Heart left ventricle (tissue), 16 donors: ENCODE measurements at regions of chr19 and their contacts with region 1.

Region 1: GRCh38 chr19:44845612-44846454 is at the start of gene NECTIN2:
- DNase-seq: peak; percentile 99 to 100 (median 100)
- ATAC-seq: peak; percentile 83 to 86 (median 86)
- H3K4me3 ChIP-seq: peak within 1 kb of the TSS; percentile 86 to 100 (median 99)
- H3K27ac ChIP-seq: peak within 1 kb of the TSS; percentile 94 to 100 (median 98)
- H3K4me1 ChIP-seq: peaks cover 15 to 56% (median 39%) of the 10 kb centered on the region in 12 donors
- H3K27me3 ChIP-seq: no peaks in the 10 kb centered on the region
- CTCF ChIP-seq: peak; percentile 39 to 86 (median 66)
- POLR2A ChIP-seq: peak; percentile 67 to 92
- total RNA-seq, gene NECTIN2: 37.0 to 99.6 (median 57.6) TPM

Region 2: DNA sequence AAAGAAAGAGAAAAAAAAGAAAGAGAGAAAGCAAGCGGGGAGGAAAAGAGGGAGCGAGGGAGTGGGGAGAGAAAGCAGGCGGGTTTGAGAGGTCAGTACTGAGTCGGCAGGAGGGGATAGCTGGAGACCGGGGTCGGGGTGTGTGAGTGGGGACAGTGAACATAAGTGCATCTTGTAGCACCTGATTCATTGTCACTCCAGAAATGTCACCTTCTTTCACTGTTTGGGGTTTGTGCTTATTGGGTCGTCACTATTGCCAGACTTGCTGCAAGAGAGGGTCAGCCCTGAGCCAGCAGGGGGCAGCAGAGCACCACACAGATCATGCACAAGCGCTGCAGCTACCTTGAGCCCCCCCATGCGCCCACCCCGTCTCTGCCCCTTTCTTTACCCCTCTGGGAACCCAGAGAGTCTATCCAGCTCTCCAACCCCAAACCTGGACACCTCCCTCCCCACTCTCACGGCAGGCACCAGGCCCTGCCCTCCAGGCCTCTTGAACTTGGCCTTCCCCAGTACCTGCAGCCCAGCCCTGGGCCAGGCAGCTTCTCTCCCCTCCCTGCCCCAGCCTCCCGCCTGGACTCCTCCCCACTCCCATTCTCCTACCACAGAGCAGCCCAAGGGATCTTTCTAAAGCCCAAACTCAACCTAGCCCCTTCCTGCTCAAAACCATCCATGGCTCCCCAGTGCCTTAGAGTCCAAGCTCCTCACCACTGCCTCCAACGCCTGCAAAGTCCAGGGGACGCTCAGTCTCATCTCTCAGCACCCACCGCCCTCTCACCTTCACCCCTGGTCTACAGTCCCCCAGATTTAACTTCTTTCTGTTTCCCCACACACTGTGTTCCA is 156.6 kb before region 1 on chr19:
- intact Hi-C with region 1: loop called in 3 of 10 experiments (anchors 5 to 10 kb)
- DNase-seq: peak; percentile 67 to 87 (median 75)
- ATAC-seq: peak; percentile 21 to 63 (median 46)
- H3K4me3 ChIP-seq: no peak overlapping the region
- H3K27ac ChIP-seq: peak overlapping the region in 1 of 12 donors; percentile 29
- H3K4me1 ChIP-seq: peaks cover 0 to 65% (median 22%) of the 10 kb centered on the region in 12 donors
- H3K27me3 ChIP-seq: no peaks in the 10 kb centered on the region
- CTCF ChIP-seq: peak; percentile 90 to 96 (median 94)
- POLR2A ChIP-seq: no peak

Region 3: GRCh38 chr19:44782729-44783128 is 63.1 kb before region 1 on chr19:
- intact Hi-C with region 1: loop called (anchors 1 to 5 kb)
- DNase-seq: no peak
- ATAC-seq: no peak
- H3K4me3 ChIP-seq: no peak overlapping the region
- H3K27ac ChIP-seq: no peak overlapping the region
- H3K4me1 ChIP-seq: peaks cover 0 to 9% (median 4%) of the 10 kb centered on the region in 12 donors
- H3K27me3 ChIP-seq: peaks cover 0 to 5% (median 2%) of the 10 kb centered on the region in 9 donors
- CTCF ChIP-seq: no peak
- POLR2A ChIP-seq: no peak

Region 4: DNA sequence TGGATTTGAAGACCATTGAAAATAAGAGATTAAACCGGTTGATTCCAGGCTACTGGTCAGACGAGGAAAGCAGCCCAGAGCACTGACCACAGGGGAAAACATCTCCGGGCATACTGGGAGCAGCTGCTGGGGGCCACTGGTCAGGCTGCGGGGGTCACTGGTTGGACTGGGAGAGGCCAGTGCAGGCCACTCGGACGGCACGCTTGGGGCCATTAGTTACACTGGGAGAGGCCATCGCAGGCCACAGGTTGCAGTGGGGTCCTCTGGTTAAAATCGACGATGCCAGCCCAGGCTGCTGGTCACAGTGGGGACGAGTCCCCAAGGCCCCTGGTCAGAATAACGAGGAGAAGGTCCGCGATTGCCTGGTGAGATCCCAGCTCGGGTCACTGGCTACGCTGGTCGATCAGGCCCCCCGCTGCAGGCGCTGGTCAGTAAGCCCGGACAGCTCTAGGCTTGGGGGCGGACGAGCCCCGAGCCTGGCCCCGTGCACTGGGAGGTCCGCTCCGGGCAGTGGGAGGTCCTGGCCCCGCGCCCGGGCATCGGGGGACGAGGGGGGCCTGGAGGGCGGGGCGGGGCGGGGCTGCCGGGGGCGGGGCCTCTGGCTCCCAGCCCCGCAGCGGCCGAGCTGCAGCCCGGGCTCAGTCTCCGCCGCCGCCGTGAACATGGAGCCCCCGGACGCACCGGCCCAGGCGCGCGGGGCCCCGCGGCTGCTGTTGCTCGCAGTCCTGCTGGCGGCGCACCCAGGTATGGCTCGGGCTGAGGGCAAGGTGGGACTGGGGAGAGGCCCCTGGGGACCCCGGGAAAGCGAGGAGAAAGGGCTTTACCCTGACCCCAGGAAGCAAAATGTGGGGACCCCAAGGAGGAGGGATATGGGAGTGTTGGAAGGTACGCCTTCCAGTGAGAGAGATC is 37.1 kb before region 1 on chr19 and contains the start of gene BCAM:
- intact Hi-C with region 1: loop called in 4 of 10 experiments (anchors 2 kb)
- DNase-seq: peak; percentile 87 to 93 (median 93)
- ATAC-seq: peak; percentile 80 to 96 (median 92)
- H3K4me3 ChIP-seq: peak within 1 kb of the TSS; percentile 32 to 94 (median 77)
- H3K27ac ChIP-seq: peak within 1 kb of the TSS; percentile 8 to 97 (median 86)
- H3K4me1 ChIP-seq: peaks cover 0 to 50% (median 22%) of the 10 kb centered on the region in 12 donors
- H3K27me3 ChIP-seq: peaks cover 0 to 8% (median 0%) of the 10 kb centered on the region in 9 donors
- CTCF ChIP-seq: no peak
- POLR2A ChIP-seq: peak in 1 of 2 donors; percentile 68
- total RNA-seq, gene BCAM: 50.9 to 160 (median 94.3) TPM

Region 5: DNA sequence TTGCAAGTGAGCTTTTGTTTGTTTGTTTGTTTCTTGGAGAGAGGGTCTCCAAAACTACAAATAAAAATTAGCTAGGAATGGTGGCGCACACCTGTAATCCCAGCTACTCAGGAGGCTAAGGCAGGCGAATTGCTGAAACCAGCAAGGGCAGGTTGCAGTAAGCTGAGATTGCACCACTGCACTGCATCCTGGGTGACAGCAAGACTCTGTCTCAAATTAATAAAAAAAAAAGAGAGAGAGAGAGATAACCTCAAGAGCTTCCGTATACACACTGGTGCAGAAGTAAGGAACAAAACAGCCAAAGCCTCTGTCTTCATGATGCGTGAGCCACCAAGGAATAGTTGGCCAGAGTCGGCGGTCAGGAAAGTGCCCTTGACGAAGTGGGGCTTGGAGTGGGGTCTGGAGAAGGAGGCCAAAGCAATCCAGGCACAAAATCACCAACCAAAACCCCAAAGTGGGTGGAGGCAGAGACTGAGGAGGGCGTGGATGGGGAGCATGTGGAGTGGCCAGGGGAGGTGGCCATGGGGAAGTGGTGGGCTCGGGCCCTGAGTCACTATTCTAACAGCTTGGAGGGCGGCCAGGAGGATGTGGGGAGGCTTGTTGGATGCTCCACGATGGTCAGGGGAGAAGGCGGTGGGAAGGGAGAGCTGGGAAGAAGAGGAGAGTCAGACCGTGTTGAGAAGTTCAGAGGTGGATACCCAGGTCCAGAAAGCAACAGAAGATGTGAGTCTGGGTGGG is 24.1 kb after region 1 on chr19:
- intact Hi-C with region 1: loop called in 2 of 10 experiments (anchors 1 to 2 kb)
- DNase-seq: peak; percentile 54 to 72 (median 68)
- ATAC-seq: peak in 3 of 4 donors; percentile 42 to 57 (median 47)
- H3K4me3 ChIP-seq: no peak overlapping the region
- H3K27ac ChIP-seq: peak overlapping the region; percentile 8 to 84 (median 59)
- H3K4me1 ChIP-seq: peaks cover 0 to 61% (median 18%) of the 10 kb centered on the region in 12 donors
- H3K27me3 ChIP-seq: no peaks in the 10 kb centered on the region
- CTCF ChIP-seq: no peak
- POLR2A ChIP-seq: no peak